ENCODE measurements at regions of chr4 and their contacts with region 1.

Region 1: GRCh38 chr4:48779998-48780742 is at the start of gene FRYL:
- DNase-seq: peak; percentile 98
- H3K4me3 ChIP-seq: peak within 1 kb of the TSS; percentile 97
- H3K27ac ChIP-seq: peak within 1 kb of the TSS; percentile 75
- H3K4me1 ChIP-seq: peaks cover 25% of the 10 kb centered on the region
- H3K27me3 ChIP-seq: no peaks in the 10 kb centered on the region
- CTCF ChIP-seq: no peak
- total RNA-seq, gene FRYL: 43.5 and 53.9 TPM in 2 replicates

Region 2: DNA sequence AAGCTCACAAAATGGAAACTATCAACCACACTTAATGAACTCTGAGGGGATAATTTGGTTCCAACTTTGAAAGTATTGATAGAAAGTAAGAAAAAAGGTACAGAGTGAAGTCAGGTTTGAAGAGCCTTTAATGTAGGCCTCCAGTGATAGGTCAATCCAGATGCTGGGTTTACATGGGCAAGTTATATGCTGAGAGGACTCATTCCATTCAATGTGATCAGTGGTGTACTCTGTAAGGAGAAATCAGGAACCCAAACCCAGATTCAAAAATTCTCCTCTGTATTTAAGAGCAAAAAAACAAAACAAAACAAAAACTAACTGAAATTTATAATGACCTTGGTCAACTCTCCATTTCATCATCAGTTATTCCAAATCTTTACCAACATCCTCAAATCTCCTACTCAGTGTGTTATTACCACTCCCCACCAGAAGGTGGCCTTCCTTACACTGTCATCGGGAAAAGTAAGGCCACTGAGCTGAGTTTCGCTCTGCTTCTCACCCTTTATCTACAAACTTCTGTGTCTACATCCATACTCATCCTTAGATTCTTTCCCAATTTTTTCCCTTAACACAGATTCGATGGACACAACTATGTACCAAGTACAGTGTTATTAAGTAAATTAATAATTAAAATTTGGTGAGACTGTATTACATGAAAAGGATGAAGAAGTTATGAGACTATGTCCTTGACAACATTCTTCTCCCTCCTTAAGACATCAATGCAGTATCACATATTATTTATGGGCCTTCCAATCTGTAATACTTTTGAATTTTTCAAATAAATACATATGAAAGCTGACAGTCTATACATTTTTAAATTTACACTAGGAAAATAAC is 201.8 kb before region 1 on chr4:
- CTCF ChIA-PET with region 1: interaction called, 3 read pairs
- POLR2A ChIA-PET with region 1: interaction called, 10 read pairs
- intact Hi-C with region 1: loop called (anchors 1 kb)
- DNase-seq: peak in 1 of 2 experiments; percentile 37
- H3K4me3 ChIP-seq: no peak overlapping the region
- H3K27ac ChIP-seq: no peak overlapping the region
- H3K4me1 ChIP-seq: no peaks in the 10 kb centered on the region
- H3K27me3 ChIP-seq: no peaks in the 10 kb centered on the region
- CTCF ChIP-seq: peak; percentile 90

Region 3: GRCh38 chr4:48604041-48604440 is 176.1 kb before region 1 on chr4:
- CTCF ChIA-PET with region 1: no interaction called
- POLR2A ChIA-PET with region 1: no interaction called
- intact Hi-C with region 1: no loop called
- DNase-seq: no peak
- H3K4me3 ChIP-seq: no peak overlapping the region
- H3K27ac ChIP-seq: no peak overlapping the region
- H3K4me1 ChIP-seq: 0 out of 2 replicates have a peak, but pooled peaks cover 3% of the 10 kb centered on the region
- H3K27me3 ChIP-seq: no peaks in the 10 kb centered on the region
- CTCF ChIP-seq: no peak

Region 4: GRCh38 chr4:48698029-48698971 is 81.9 kb before region 1 on chr4:
- CTCF ChIA-PET with region 1: no interaction called
- POLR2A ChIA-PET with region 1: interaction called, 5 read pairs
- intact Hi-C with region 1: loop called (anchors 1 kb)
- DNase-seq: peak; percentile 76 to 90
- H3K4me3 ChIP-seq: peak overlapping the region; percentile 49; the same call in 1 of the 2 replicates
- H3K27ac ChIP-seq: peak overlapping the region; percentile 89
- H3K4me1 ChIP-seq: peaks cover 48% of the 10 kb centered on the region
- H3K27me3 ChIP-seq: no peaks in the 10 kb centered on the region
- CTCF ChIP-seq: no peak

Region 5: GRCh38 chr4:48748949-48749596 is 31.1 kb before region 1 on chr4:
- CTCF ChIA-PET with region 1: no interaction called
- POLR2A ChIA-PET with region 1: interaction called, 10 read pairs
- intact Hi-C with region 1: no loop called
- DNase-seq: no peak
- H3K4me3 ChIP-seq: no peak overlapping the region
- H3K27ac ChIP-seq: no peak overlapping the region
- H3K4me1 ChIP-seq: no peaks in the 10 kb centered on the region
- H3K27me3 ChIP-seq: no peaks in the 10 kb centered on the region
- CTCF ChIP-seq: no peak

Region 6: GRCh38 chr4:48906206-48907173 is 126.3 kb after region 1 on chr4 and contains the start of gene OCIAD2:
- CTCF ChIA-PET with region 1: no interaction called
- POLR2A ChIA-PET with region 1: interaction called, 5 read pairs
- intact Hi-C with region 1: loop called (anchors 5 kb)
- DNase-seq: peak; percentile 71 to 80
- H3K4me3 ChIP-seq: peak within 1 kb of the TSS; percentile 90
- H3K27ac ChIP-seq: peak within 1 kb of the TSS; percentile 20; the same call in 1 of the 2 replicates
- H3K4me1 ChIP-seq: peaks cover 34% of the 10 kb centered on the region
- H3K27me3 ChIP-seq: no peaks in the 10 kb centered on the region
- CTCF ChIP-seq: no peak; the same call in 1 of the 2 replicates
- total RNA-seq, gene OCIAD2: 133 and 136 TPM in 2 replicates